Activated naive CD8-positive, alpha-beta T cell treated with anti-CD3 and anti-CD28 coated beads, Interleukin-2, amount 10 ng/mL, durations not matched to agents 7 days and 5 days (primary cell): ENCODE measurements at regions of chr14 and their contacts with region 1.

Region 1: GRCh38 chr14:92106143-92106926 is at the start of gene ATXN3:
- DNase-seq: peak; percentile 88
- ATAC-seq: peak; percentile 95
- H3K4me3 Mint-ChIP-seq: peak within 1 kb of the TSS; percentile 96
- H3K27ac Mint-ChIP-seq: peak within 1 kb of the TSS; percentile 88
- H3K4me1 Mint-ChIP-seq: peaks cover 29% of the 10 kb centered on the region
- H3K27me3 Mint-ChIP-seq: no peaks in the 10 kb centered on the region
- total RNA-seq, gene ATXN3: 39.1 to 41.8 TPM

Region 2: DNA sequence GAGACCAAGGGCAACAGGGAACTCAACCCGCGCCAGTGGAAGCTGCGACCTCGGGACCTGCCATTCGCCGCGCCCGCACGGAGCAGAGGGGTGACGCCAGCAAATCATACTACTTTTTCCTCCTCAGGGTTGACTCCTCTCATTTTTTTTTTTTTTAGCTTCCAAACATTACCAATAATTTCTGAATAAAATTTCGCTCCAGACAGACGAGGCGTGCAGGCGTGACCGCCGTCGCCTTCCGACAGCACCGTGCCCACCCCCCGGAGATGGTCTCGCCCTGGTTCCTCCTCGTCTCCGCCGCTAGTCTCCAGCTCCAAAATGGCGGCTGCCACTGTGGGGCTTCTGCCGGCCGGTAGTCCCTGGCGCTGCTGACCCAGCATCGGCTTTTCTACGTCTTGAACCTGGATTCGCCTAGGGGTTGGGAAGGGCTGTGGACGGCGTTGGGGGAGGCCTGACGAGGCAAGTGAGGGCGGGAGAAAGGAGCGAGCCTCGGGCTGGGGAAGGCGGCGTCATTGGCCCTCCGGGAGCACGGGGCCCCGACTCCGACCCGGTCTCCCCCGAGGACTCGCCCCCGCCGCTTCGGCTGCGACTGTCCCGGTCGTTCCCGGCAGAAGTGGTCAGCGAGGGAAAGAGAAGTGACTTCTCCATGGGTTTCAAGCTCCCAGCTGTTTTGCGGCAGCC is 15.5 kb after region 1 on chr14 and contains the starts of genes CPSF2 and NDUFB1:
- POLR2A ChIA-PET with region 1: interaction called, 67 read pairs
- DNase-seq: peak; percentile 91
- ATAC-seq: peak; percentile 89
- H3K4me3 Mint-ChIP-seq: peak within 1 kb of the TSS; percentile 96
- H3K27ac Mint-ChIP-seq: peak within 1 kb of the TSS; percentile 100
- H3K4me1 Mint-ChIP-seq: peaks cover 28% of the 10 kb centered on the region
- H3K27me3 Mint-ChIP-seq: no peaks in the 10 kb centered on the region
- total RNA-seq, gene CPSF2: 70.6 to 76.0 TPM
- total RNA-seq, gene NDUFB1: 126 to 138 TPM